Mucosa of descending colon (tissue), 3 donors: ENCODE measurements at regions of chr2 and their contacts with region 1.

Region 1: DNA sequence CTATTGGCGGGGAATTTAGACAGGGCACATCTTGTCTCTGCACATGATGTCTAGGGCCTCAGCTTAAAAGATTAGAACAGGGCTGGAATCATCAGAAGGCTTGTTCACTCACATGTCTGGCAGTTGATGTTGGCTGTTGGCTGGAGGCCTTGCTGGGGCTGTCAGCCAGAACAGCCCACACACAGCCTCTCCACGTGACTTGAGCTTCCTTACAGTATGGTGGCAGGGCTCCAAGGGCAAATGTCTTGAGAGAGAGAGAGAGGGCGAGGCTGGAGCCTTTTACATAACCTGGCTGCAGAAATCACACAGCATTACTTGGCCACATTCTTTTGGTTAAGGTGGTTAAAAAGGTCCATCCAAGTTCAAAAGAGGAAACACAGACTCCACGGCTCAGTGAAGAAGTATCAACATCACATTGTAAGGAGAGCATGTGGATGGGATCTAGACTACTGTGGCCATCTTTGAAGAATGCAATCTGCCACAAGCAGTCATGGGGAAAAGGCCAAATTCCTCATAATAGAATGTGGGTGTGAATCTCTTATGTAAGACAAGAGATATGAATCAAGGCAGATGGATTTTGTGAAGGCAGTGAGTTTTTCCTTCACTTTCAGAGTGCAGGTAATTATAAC is 30.4 kb downstream of the SRSF7 start:
- DNase-seq: peak in 2 of 3 donors; percentile 43 to 64
- ATAC-seq: peak; percentile 72
- H3K4me3 ChIP-seq: no peak overlapping the region
- H3K4me1 ChIP-seq: no peaks in the 10 kb centered on the region
- CTCF ChIP-seq: no peak

Region 2: GRCh38 chr2:38581193-38582147 is 139.3 kb before region 1 on chr2:
- intact Hi-C with region 1: loop called in 1 of 2 experiments (anchors 10 kb)
- DNase-seq: peak in 1 of 3 donors; percentile 56
- ATAC-seq: peak; percentile 85
- H3K4me3 ChIP-seq: no peak overlapping the region
- H3K4me1 ChIP-seq: peaks cover 4% of the 10 kb centered on the region
- CTCF ChIP-seq: peak; percentile 27

Region 3: GRCh38 chr2:38634684-38635083 is 86.0 kb before region 1 on chr2:
- intact Hi-C with region 1: no loop called
- DNase-seq: no peak
- ATAC-seq: no peak
- H3K4me3 ChIP-seq: no peak overlapping the region
- H3K4me1 ChIP-seq: no peaks in the 10 kb centered on the region
- CTCF ChIP-seq: no peak